ENCODE measurements at regions of chr3 and their contacts with region 1.

Region 1: GRCh38 chr3:51391075-51391567 is at the start of gene RBM15B:
- DNase-seq: peak; percentile 98
- H3K4me3 Mint-ChIP-seq: peak within 1 kb of the TSS; percentile 86
- H3K27ac Mint-ChIP-seq: peak within 1 kb of the TSS; percentile 87
- H3K4me1 Mint-ChIP-seq: peaks cover 81% of the 10 kb centered on the region
- H3K27me3 Mint-ChIP-seq: no peaks in the 10 kb centered on the region
- total RNA-seq, gene RBM15B: 19.0 to 19.4 TPM

Region 2: DNA sequence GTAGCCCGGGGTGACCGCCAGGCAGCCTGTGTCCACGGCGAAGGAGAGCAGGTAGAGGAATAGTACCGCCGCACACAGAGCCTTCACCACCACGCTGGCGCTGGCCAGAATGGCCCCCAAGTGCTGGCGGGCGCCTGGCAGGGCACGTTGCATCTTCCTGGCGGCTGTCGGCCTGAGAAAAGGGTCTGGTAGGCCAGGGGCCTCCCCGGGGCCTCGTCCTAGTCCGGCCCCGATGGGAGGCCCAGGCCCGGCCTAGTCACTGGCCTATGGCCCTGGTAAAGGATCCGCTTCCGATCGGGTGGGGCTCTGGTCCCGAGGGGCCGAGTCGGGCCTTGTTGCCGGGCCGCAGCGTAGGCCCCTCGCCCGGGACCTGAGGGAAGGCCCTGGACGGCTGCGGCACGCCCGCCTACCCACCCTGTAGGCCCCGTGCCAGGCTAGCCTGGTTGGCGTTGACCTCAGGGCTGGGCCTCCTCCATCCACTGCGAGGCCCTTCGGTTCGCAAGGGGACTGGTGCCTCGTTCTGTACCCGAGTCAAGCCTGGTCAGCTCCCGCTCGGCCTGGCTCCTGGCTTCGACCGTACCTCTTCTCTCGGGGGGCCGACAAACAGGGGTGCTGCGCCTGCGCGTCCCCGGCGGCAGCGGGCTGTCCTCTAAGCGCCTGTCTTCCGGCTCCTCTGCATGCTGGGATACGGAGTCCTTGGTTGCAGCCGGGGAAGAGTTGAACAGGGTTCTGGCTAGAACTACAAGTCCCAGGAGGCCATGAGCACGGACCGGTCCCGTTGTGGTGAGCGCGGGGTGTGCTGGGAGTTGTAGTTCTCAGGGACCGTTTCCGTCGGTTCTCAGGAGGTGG is 1032.0 kb before region 1 on chr3 and contains the start of gene TMEM115:
- CTCF ChIA-PET with region 1: no interaction called
- POLR2A ChIA-PET with region 1: no interaction called
- intact Hi-C with region 1: loop called (anchors 10 kb)
- DNase-seq: peak; percentile 97
- H3K4me3 Mint-ChIP-seq: peak within 1 kb of the TSS; percentile 95
- H3K27ac Mint-ChIP-seq: peak within 1 kb of the TSS; percentile 86
- H3K4me1 Mint-ChIP-seq: peaks cover 39% of the 10 kb centered on the region
- H3K27me3 Mint-ChIP-seq: no peaks in the 10 kb centered on the region
- total RNA-seq, gene TMEM115: 16.0 TPM

Region 3: DNA sequence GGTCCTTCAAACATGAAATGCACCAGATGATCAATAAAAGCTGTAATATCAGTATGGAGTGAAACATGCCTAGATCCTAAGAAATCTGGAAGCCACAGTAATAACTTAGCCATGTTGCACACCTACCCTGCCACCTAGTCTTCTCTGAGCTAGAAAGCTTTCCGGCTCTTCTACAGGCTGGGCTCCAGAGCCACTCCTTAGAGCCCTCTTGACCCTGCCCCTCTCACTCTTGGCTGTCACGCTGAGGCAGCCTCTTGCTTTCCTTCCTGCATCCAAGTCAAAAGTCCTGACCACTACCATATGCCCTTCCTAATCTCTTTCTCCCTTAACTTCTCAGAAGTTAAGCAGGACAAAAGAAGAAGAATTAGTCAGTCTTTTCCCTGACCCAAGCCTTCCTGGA is 17.7 kb after region 1 on chr3:
- CTCF ChIA-PET with region 1: interaction called, 10 read pairs
- POLR2A ChIA-PET with region 1: interaction called, 3 read pairs
- intact Hi-C with region 1: no loop called
- DNase-seq: no peak
- H3K4me3 Mint-ChIP-seq: no peak overlapping the region
- H3K27ac Mint-ChIP-seq: no peak overlapping the region
- H3K4me1 Mint-ChIP-seq: peaks cover 17% of the 10 kb centered on the region
- H3K27me3 Mint-ChIP-seq: no peaks in the 10 kb centered on the region

Region 4: GRCh38 chr3:51434746-51435327 is 43.7 kb after region 1 on chr3:
- CTCF ChIA-PET with region 1: interaction called, 19 read pairs
- POLR2A ChIA-PET with region 1: no interaction called
- intact Hi-C with region 1: loop called (anchors 1 kb)
- DNase-seq: peak; percentile 56
- H3K4me3 Mint-ChIP-seq: no peak overlapping the region
- H3K27ac Mint-ChIP-seq: no peak overlapping the region
- H3K4me1 Mint-ChIP-seq: peaks cover 7% of the 10 kb centered on the region
- H3K27me3 Mint-ChIP-seq: no peaks in the 10 kb centered on the region

Region 5: DNA sequence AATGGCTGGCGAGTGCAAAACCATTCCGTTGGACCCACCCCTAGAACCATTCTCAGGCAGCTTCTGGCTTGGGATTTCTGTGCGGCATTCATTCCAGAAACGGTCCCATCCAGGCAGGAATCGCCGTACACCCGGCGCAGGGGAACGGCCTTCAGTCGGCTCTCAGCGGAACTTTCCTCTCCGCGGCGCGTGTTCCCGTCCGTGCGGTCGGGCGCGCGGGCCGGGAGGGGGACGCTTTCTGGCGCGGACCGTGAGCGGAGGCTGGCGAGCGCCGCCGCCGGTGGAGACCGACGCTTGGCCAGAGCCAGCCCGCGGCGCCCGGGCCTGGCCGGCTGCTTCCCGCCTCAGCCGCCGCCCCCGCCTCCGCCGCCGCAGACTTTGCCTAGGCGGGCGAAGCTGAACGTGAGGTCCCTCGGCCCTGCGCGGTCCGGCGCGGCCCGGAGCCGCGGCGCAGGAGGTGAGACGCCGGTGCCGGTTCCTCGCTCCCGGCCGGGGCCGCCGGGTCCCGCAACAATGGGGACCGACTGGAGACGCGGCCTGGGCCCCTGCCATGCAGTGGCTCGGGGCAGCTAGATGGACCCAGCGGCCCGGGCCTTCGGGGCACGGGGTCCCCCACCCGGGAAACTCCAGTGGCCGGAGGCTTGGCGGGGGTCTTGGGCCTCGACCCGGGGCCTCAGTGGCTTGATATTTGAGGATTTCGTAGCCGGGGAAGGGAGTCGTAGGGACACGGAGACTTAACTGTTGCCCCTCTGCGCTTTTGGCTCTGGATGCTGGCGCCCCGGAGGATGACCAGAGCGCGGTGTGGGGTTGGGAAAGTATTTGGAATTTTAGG is 147.6 kb after region 1 on chr3 and contains the start of gene RAD54L2:
- CTCF ChIA-PET with region 1: interaction called, 6 read pairs
- POLR2A ChIA-PET with region 1: no interaction called
- intact Hi-C with region 1: loop called (anchors 2 kb)
- DNase-seq: peak; percentile 83
- H3K4me3 Mint-ChIP-seq: peak within 1 kb of the TSS; percentile 88
- H3K27ac Mint-ChIP-seq: peak within 1 kb of the TSS; percentile 87
- H3K4me1 Mint-ChIP-seq: peaks cover 28% of the 10 kb centered on the region
- H3K27me3 Mint-ChIP-seq: no peaks in the 10 kb centered on the region
- total RNA-seq, gene RAD54L2: 27.6 to 30.0 TPM

Region 6: GRCh38 chr3:51581529-51581928 is 190.4 kb after region 1 on chr3:
- CTCF ChIA-PET with region 1: no interaction called
- POLR2A ChIA-PET with region 1: no interaction called
- intact Hi-C with region 1: no loop called
- DNase-seq: no peak
- H3K4me3 Mint-ChIP-seq: no peak overlapping the region
- H3K27ac Mint-ChIP-seq: no peak overlapping the region
- H3K4me1 Mint-ChIP-seq: peaks cover 3% of the 10 kb centered on the region
- H3K27me3 Mint-ChIP-seq: no peaks in the 10 kb centered on the region

Region 7: DNA sequence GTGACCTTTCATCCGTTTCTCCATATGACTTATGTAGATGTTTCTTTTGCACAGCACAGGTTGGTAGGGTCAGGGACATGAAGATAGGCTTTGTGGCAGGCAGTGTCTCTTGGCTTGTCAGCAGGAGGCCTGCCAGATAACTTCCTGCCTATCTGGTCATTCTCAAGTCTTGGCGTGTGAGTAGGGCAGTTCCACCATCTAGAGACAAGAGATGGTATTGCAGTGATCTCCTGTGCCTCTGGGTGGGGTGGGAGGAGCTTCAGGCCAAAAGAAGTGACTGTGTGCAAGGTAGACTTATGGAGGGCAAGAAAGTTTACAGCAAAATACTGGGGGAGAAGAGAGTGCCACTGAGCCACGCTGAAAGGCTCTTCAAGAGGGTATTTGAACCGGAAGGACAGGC is 291.0 kb after region 1 on chr3:
- CTCF ChIA-PET with region 1: interaction called, 22 read pairs
- POLR2A ChIA-PET with region 1: no interaction called
- intact Hi-C with region 1: loop called (anchors 2 kb)
- DNase-seq: peak; percentile 86
- H3K4me3 Mint-ChIP-seq: no peak overlapping the region
- H3K27ac Mint-ChIP-seq: peak overlapping the region; percentile 79
- H3K4me1 Mint-ChIP-seq: peaks cover 83% of the 10 kb centered on the region
- H3K27me3 Mint-ChIP-seq: no peaks in the 10 kb centered on the region

Region 8: GRCh38 chr3:51995346-51996163 is 604.4 kb after region 1 on chr3 and contains the start of gene RPL29:
- CTCF ChIA-PET with region 1: no interaction called
- POLR2A ChIA-PET with region 1: no interaction called
- intact Hi-C with region 1: loop called (anchors 5 kb)
- DNase-seq: peak; percentile 96
- H3K4me3 Mint-ChIP-seq: peak within 1 kb of the TSS; percentile 98
- H3K27ac Mint-ChIP-seq: peak within 1 kb of the TSS; percentile 99
- H3K4me1 Mint-ChIP-seq: peaks cover 34% of the 10 kb centered on the region
- H3K27me3 Mint-ChIP-seq: no peaks in the 10 kb centered on the region
- total RNA-seq, gene RPL29: 1,502 to 1,507 TPM